Activated CD4-positive, alpha-beta T cell treated with anti-CD3 and anti-CD28 coated beads, Interleukin-2, amount 10 ng/mL, durations not matched to agents 7 days and 5 days (primary cell): ENCODE measurements at regions of chr5 and their contacts with region 1.

Region 1: DNA sequence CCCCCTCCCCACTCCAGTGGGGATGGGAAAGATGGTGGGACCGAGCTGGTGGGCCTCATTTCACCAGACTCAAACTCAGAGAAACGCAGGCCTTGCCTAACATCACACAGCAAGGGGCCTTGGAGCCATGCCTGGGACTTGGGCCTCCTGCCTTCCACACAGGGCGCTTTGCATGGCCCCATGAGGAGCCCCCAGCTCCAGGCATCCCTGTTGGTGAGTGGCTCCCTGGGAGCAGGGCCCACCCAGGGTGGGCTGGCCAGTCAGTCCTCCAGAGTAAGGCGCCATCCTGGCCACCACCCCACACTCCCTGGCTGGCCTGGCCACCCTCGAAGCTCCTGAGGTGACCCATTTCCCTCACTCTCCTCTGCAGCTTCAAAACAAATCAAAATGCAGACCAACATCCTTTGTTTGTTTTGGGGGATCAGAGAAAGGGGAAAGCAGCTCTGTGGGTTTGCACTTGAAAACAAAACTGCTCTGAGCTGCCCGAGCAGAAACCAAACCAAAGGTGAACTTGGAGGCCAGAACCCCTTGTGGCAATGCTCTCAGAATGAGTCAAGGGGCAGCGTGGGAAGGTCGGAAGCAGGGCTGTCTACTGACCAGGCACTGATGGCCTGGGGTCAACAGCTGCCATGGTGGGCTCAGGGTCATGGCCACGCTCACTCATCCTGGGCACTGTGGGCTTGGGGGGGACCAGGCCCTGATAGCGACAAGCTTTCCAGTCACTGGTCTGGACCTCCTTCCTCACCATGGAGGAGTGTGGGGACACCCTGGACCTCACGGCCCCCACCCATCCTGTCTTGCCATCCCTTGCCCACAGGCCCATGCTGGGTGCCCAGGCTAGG is 37.0 kb upstream of the VDAC1 start:
- DNase-seq: peak; percentile 32
- H3K4me3 Mint-ChIP-seq: no peak overlapping the region
- H3K27ac Mint-ChIP-seq: peak overlapping the region; percentile 81
- H3K4me1 Mint-ChIP-seq: peaks cover 56% of the 10 kb centered on the region
- H3K27me3 Mint-ChIP-seq: peaks cover 2% of the 10 kb centered on the region

Region 2: DNA sequence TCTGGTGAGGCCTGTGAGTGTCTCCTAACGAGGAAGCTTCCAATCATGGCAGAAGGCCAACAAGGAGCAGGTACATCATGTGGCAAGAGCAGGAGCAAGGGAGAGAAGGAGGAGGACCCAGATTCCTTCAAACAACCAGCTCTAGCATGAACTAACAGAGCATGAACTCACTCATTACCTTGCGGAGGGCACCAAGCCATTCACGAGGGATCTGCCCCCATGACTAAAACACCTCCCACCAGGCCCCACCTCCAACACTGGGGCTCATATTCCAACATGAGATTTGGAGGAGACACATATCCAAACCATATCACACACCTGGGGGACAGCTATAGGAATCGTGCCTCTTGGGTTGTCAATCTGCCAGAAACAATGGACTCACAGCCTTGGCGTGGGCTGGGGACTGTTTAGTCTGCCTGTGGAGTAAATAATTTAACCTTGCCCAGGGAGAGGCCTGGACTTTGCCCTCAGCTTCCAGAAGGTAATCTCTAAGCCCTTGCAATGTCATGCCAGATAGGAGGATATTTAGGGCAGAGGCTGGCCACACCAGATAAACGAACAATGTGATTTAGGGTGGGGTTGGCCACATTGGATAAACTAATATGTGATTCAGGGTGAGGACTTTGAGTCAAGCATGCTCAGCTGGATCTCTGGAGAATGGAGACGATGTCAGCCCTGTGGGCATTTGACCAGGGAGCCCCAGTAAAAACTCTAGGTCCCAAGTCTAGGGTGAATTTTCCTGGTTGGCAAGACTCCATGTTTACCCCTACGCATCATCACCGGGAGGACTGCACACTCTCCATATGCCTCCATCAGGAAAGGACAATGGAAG is 23.4 kb before region 1 on chr5:
- CTCF ChIA-PET with region 1: interaction called, 24 read pairs
- POLR2A ChIA-PET with region 1: no interaction called
- DNase-seq: no peak
- H3K4me3 Mint-ChIP-seq: no peak overlapping the region
- H3K27ac Mint-ChIP-seq: no peak overlapping the region
- H3K4me1 Mint-ChIP-seq: peaks cover 1% of the 10 kb centered on the region
- H3K27me3 Mint-ChIP-seq: peaks cover 5% of the 10 kb centered on the region

Region 3: DNA sequence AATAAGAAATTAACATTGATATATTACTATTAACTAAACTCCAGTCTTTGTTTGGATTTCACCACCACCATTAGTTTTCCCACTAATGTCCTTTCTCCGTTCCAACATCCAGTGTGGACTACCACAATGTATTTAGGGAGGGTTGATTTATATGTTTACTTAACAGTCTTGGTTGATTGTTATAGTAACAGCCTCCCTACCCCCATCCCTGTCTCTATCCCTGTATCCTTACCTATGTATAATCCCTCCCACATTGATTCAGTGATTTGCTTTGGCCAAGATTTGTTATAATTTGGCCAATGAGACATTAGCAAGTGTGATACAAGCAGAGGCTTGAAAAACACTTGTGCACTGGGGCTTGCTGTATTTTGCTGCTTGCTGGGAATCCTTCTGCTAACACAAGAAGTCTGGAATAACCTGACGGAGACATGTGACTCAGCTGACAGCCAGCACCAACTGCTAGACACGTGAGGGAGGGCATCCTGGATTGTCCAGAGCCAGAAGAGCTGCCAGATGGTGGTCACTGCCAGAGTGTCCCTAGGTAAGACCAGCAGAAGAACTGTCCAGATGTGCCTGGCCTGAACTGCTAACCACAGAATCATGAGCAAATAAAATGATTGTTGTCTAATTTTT is 21.5 kb after region 1 on chr5:
- CTCF ChIA-PET with region 1: interaction called, 10 read pairs
- POLR2A ChIA-PET with region 1: interaction called, 3 read pairs
- DNase-seq: no peak
- H3K4me3 Mint-ChIP-seq: no peak overlapping the region
- H3K27ac Mint-ChIP-seq: no peak overlapping the region
- H3K4me1 Mint-ChIP-seq: peaks cover 8% of the 10 kb centered on the region
- H3K27me3 Mint-ChIP-seq: peaks cover 2% of the 10 kb centered on the region

Region 4: DNA sequence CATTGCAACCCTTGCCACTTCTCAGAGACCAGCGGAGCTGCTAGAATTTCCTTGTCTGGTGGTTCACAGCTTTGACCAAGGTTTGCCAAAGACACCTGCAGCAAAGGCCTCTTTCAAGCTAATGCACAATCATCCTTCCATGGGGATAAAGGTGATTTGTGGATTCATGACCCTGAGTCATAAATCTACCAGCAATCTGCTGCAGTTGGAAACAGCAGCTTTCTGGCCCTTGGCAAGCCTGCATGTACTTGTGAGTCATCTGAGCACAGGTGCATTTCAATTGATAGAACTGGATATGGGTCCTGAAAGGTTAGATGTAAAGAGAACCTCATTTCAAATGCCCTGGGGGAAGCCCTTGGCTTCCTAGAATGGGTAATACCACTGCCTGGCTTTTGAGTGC is 51.1 kb after region 1 on chr5:
- CTCF ChIA-PET with region 1: interaction called, 44 read pairs
- POLR2A ChIA-PET with region 1: no interaction called
- DNase-seq: no peak
- H3K4me3 Mint-ChIP-seq: no peak overlapping the region
- H3K27ac Mint-ChIP-seq: peak overlapping the region; percentile 39
- H3K4me1 Mint-ChIP-seq: peaks cover 76% of the 10 kb centered on the region
- H3K27me3 Mint-ChIP-seq: peaks cover 1% of the 10 kb centered on the region

Region 5: DNA sequence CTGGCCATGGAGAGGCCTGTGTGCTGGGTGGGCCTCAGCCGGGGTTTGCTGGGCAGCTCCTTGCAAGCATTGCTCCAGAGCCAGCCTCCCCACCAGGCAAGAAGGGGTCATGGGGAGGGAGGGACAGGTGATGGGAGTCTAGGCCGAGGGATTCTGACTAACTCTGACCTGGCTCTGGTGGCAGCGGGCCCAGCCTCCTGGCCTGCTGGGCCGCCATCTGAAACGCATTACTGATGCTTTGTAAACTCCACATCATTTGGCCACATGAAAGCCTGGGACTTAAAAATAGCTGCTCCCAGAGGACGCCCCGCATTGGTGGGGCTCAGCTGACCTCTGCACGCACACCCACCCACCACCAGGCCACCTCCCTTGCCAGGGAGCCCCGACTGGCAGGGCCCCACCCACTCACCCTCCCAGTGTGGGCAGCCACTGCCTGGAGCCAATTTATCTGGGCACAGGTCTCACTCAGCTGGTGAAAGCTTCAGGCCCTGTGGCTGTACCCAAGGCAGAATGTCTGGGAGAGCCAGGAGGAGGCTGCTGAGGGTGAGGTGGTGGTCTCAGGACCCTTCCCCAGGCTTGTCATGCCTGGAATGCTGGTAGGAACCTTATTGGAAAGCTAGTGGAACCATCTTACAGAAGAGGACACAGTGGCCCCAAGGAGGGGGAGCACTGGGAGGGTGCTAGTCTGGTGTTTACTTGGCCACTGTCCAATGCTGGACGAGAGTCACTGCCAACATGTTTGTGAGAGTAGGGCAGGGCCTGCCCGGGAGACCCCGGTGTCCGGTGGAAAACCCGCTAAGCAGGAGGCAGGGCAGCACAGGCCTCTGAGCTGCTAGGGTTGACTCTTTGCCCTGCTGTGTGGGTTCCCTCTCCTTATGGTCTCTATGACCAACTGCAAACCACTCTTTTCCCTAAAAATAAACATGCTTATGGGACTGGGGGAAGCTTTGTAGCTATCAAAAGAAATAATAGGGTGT is 83.5 kb after region 1 on chr5:
- CTCF ChIA-PET with region 1: interaction called, 27 read pairs
- POLR2A ChIA-PET with region 1: no interaction called
- DNase-seq: no peak
- H3K4me3 Mint-ChIP-seq: peak overlapping the region; percentile 79
- H3K27ac Mint-ChIP-seq: peak overlapping the region; percentile 94
- H3K4me1 Mint-ChIP-seq: peaks cover 98% of the 10 kb centered on the region
- H3K27me3 Mint-ChIP-seq: peaks cover 1% of the 10 kb centered on the region

Region 6: GRCh38 chr5:134394932-134395331 is 353.1 kb after region 1 on chr5:
- CTCF ChIA-PET with region 1: no interaction called
- POLR2A ChIA-PET with region 1: no interaction called
- DNase-seq: no peak
- H3K4me3 Mint-ChIP-seq: no peak overlapping the region
- H3K27ac Mint-ChIP-seq: no peak overlapping the region
- H3K4me1 Mint-ChIP-seq: no peaks in the 10 kb centered on the region
- H3K27me3 Mint-ChIP-seq: no peaks in the 10 kb centered on the region